Activated CD4-positive, alpha-beta memory T cell treated with anti-CD3 and anti-CD28 coated beads for 36 hours (primary cell): ENCODE measurements at regions of chr6 and their contacts with region 1.

Region 1: GRCh38 chr6:135183532-135184440 is 2.7 kb downstream of the MYB start:
- DNase-seq: peak; percentile 91
- H3K4me3 Mint-ChIP-seq: peak overlapping the region; percentile 88
- H3K27ac Mint-ChIP-seq: peak overlapping the region; percentile 92
- H3K4me1 Mint-ChIP-seq: peaks cover 17% of the 10 kb centered on the region
- H3K27me3 Mint-ChIP-seq: no peaks in the 10 kb centered on the region

Region 2: GRCh38 chr6:134979142-134979541 is 204.6 kb before region 1 on chr6:
- CTCF ChIA-PET with region 1: interaction called, 5 read pairs
- POLR2A ChIA-PET with region 1: no interaction called
- intact Hi-C with region 1: loop called (anchors 1 kb)
- DNase-seq: peak; percentile 78
- H3K4me3 Mint-ChIP-seq: no peak overlapping the region
- H3K27ac Mint-ChIP-seq: peak overlapping the region; percentile 72
- H3K4me1 Mint-ChIP-seq: peaks cover 45% of the 10 kb centered on the region
- H3K27me3 Mint-ChIP-seq: no peaks in the 10 kb centered on the region

Region 3: GRCh38 chr6:135054569-135055498 is 129.0 kb before region 1 on chr6 and contains the start of gene HBS1L:
- CTCF ChIA-PET with region 1: interaction called, 4 read pairs
- POLR2A ChIA-PET with region 1: interaction called, 4 read pairs
- intact Hi-C with region 1: loop called (anchors 1 kb)
- DNase-seq: peak; percentile 98
- H3K4me3 Mint-ChIP-seq: peak within 1 kb of the TSS; percentile 92
- H3K27ac Mint-ChIP-seq: peak within 1 kb of the TSS; percentile 96
- H3K4me1 Mint-ChIP-seq: peaks cover 34% of the 10 kb centered on the region
- H3K27me3 Mint-ChIP-seq: no peaks in the 10 kb centered on the region
- total RNA-seq, gene HBS1L: 117 to 123 TPM

Region 4: DNA sequence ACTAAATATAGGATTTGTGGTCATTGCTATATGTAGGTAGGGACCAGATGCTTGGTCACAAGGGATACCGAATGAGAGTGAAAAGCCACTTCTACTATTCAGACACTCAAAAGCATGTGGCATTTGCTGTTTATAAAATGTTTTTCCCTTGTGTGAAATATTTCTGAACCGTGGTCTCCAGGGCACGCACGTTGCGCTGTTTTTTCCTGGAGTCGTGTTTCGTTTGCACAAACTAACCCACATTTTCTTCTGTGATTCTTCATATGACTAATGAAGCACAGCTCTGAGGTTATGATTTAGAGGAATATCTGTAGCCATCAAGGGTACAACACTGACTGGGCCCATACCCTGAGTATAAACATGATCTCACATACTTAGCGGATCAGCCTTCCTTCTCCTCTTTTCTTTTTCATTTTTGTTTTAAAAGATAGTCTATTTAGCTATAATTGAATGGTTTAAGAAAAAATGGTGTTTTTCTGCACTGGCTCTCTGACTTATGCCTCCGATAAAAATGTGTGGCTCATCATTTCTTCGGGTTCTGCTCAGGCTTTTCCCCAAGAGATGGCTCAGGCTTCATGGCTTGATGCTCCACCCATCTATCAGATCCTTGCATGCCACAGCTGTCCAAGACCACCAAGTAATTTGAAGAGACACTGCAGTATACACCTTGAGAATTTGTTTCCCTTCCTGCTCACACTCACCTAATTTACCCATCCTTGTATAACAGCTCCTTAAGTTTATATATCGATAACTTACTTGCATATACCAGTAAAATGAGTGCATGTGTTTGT is 69.2 kb before region 1 on chr6:
- CTCF ChIA-PET with region 1: interaction called, 6 read pairs
- POLR2A ChIA-PET with region 1: interaction called, 7 read pairs
- intact Hi-C with region 1: loop called (anchors 1 kb)
- DNase-seq: peak; percentile 86
- H3K4me3 Mint-ChIP-seq: peak overlapping the region; percentile 44
- H3K27ac Mint-ChIP-seq: peak overlapping the region; percentile 96
- H3K4me1 Mint-ChIP-seq: peaks cover 65% of the 10 kb centered on the region
- H3K27me3 Mint-ChIP-seq: no peaks in the 10 kb centered on the region

Region 5: DNA sequence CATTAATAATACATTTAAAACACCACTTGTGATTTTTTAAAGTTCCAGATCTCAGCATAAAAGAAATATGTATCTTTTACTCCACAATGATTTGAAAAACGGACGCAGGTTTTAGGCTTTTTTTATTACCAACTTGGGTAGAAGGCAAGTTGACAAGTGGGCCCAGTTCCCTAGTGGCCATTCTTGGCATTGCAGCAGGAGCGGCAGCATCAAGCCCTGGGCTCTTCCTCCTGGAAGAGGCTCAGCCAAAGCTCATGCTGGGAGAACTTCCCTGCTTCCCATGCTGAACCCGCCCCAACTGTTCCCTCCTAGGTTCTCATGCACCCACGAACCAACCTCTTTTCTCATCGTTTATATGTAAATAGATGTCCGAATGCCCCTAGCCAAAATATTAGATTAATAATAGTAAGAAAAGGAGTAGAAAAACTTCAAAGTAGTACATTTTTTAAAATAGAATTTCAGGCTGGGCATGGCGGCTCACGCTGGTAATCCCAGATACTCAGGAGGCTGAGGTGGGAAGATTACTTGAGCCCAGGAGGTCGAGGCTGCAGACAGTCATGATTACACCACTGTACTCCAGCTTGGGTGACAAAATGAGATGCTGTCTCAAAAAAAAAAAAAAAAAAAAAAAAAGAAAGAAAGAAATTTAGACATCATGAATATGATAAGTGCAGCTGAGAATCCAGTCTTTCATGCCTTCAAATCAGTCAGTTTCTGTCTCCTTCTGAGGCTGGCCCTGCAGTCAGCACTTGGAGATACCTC is 20.9 kb before region 1 on chr6:
- CTCF ChIA-PET with region 1: interaction called, 11 read pairs
- POLR2A ChIA-PET with region 1: interaction called, 6 read pairs
- intact Hi-C with region 1: loop called (anchors 1 kb)
- DNase-seq: peak; percentile 54
- H3K4me3 Mint-ChIP-seq: peak overlapping the region; percentile 49
- H3K27ac Mint-ChIP-seq: peak overlapping the region; percentile 78
- H3K4me1 Mint-ChIP-seq: peaks cover 61% of the 10 kb centered on the region
- H3K27me3 Mint-ChIP-seq: peaks cover 3% of the 10 kb centered on the region

Region 6: GRCh38 chr6:135212020-135212806 is 28.4 kb after region 1 on chr6:
- CTCF ChIA-PET with region 1: interaction called, 5 read pairs
- POLR2A ChIA-PET with region 1: interaction called, 3 read pairs
- intact Hi-C with region 1: loop called (anchors 1 kb)
- DNase-seq: peak; percentile 55
- H3K4me3 Mint-ChIP-seq: peak overlapping the region; percentile 4
- H3K27ac Mint-ChIP-seq: peak overlapping the region; percentile 30
- H3K4me1 Mint-ChIP-seq: peaks cover 38% of the 10 kb centered on the region
- H3K27me3 Mint-ChIP-seq: no peaks in the 10 kb centered on the region